Calu3 (cell line): ENCODE measurements at regions of chr7 and their contacts with region 1.

Region 1: DNA sequence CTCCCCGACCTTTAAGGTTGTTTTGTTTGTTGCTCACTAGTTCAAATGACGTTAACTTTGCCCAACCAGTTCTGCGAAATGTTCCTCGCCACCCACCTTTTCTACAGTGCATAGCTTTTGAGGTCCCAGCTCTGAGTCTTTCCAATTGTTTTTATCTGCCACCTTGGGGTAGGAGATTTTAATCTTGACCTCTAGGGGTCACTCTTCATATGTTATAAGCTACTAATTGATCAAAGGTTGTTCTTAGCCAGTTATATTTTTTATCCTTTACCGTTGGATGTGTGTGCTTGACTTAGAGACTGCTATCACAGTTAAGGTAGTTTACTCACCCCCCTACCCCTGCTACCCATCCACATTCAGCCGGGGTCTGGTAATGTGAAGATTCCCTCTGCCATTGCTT is 372.4 kb downstream of the SUGCT start:
- DNase-seq: no peak
- H3K4me3 Mint-ChIP-seq: no peak overlapping the region
- H3K27ac Mint-ChIP-seq: no peak overlapping the region
- H3K4me1 Mint-ChIP-seq: no peaks in the 10 kb centered on the region
- H3K27me3 Mint-ChIP-seq: no peaks in the 10 kb centered on the region
- CTCF ChIP-seq: no peak

Region 2: DNA sequence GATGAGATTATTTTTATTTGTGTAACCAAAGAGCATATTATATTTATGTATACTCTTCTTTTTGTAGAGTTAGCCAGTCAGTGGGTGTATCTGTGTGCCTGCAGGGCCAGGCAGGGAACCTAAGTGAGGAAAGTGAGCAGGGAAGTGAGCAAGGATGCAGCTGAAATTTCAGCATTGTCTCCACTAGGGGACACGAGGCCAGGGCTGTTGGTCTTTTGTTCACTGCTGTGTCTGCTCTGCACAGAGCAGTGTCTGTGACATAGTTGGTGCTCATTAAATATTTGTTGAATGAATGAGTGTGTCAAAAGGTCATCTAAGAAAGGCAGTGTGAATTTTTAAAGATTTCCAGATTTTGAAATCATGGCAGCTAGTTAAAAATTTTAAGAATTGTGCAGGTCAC is 320.6 kb before region 1 on chr7:
- CTCF ChIA-PET with region 1: no interaction called
- intact Hi-C with region 1: no loop called
- DNase-seq: no peak
- H3K4me3 Mint-ChIP-seq: no peak overlapping the region
- H3K27ac Mint-ChIP-seq: no peak overlapping the region
- H3K4me1 Mint-ChIP-seq: no peaks in the 10 kb centered on the region
- H3K27me3 Mint-ChIP-seq: no peaks in the 10 kb centered on the region
- CTCF ChIP-seq: peak; percentile 48

Region 3: GRCh38 chr7:40447345-40447744 is 59.8 kb before region 1 on chr7:
- CTCF ChIA-PET with region 1: no interaction called
- intact Hi-C with region 1: no loop called
- DNase-seq: no peak
- H3K4me3 Mint-ChIP-seq: no peak overlapping the region
- H3K27ac Mint-ChIP-seq: no peak overlapping the region
- H3K4me1 Mint-ChIP-seq: peaks cover 5% of the 10 kb centered on the region
- H3K27me3 Mint-ChIP-seq: no peaks in the 10 kb centered on the region
- CTCF ChIP-seq: no peak

Region 4: DNA sequence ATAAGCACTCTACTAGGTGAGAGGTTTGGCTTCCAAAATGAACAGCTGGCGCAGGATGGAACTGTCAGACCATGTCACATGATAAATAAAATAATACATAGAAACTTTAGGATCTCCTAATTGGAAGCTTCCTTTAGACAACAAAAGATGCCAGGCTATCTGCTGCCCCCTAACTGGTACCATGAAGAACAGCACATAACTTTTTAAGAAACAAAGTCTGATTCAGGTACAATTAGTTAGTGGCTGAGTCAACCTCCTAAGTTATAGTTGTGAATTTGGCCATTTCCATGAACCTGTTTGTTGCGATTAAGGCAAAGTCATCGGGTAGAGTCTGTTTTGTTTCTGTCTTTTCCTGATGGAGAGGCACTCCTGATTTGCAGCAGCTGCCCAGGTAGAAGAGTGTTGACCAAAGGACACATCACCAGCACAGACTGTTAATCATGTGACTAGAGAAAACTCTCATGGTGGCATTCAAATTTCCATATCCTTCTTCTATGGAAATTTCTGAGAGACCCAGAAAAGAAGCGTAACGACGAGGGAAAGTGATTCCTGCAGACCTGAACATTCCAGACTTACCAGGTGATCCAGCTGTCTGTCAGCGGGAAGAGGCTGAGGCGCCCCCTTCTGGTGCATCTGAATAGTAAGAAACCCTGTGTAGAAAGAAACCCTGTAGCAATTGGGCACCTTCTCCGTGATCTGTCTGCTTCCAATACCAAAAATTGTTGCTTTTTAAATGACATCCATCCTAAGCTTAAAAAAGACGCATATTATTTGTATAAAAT is 1204.3 kb after region 1 on chr7:
- CTCF ChIA-PET with region 1: interaction called, 3 read pairs
- intact Hi-C with region 1: loop called (anchors 10 kb)
- DNase-seq: peak; percentile 70
- H3K4me3 Mint-ChIP-seq: no peak overlapping the region
- H3K27ac Mint-ChIP-seq: no peak overlapping the region
- H3K4me1 Mint-ChIP-seq: peaks cover 22% of the 10 kb centered on the region
- H3K27me3 Mint-ChIP-seq: no peaks in the 10 kb centered on the region
- CTCF ChIP-seq: peak; percentile 86